GM10248 (cell line): ENCODE measurements at regions of chr2 and their contacts with region 1.

Region 1: DNA sequence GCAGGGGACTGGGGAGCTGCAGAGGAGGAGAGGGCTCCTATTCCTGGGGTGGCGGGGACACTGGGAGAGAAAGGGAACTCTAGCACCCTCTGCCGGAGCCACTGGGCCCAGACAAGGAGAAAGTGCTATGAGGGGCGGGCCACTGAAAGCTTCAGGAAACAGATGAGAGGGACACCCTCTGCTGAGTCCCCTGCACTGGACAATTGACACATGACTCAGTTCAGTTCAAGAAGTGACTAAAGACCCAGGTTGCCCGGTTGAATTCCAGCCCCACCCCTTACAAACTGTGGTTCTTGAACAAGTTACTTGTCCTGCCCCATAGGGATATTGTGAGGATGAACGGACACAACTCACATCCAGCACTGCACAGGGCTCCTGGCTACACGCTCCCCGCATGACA is 5.0 kb downstream of the RUFY4 start:
- DNase-seq: peak; percentile 62
- CTCF ChIP-seq: peak; percentile 67

Region 2: GRCh38 chr2:218060118-218060517 is 13.9 kb before region 1 on chr2:
- CTCF ChIA-PET with region 1: interaction called, 15 read pairs
- POLR2A ChIA-PET with region 1: no interaction called
- DNase-seq: no peak
- CTCF ChIP-seq: no peak

Region 3: DNA sequence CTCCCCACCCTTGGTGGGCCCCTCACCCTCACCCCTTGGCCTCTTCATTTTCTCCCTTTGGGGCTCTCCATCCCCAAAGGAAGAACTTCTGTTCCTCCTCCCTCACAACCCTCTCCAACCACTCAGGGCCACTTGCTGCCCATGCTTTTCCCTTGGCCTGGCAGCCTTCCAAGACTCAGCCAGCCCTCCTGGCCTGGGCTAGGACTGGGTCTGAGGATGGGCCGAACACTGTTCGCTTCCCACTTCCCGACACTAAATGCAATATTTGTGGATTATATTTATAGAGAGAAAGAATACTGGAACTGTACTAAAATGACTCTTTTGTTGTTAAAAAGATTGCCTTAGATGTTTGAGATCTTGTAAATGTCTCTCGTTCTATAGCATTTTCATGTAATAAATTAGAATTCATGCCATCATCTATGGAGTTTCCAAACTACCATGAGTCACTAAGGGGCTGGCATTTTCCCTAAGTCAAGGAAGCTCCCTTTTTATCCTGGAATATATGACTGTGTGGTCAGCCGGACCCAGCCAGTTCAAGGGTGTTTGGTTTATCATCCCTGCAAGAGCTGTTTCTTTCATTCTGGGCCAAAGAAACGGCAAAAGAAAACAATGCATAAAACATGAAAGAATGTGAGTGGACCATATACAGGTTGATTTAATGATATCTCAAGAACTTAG is 55.6 kb after region 1 on chr2:
- CTCF ChIA-PET with region 1: no interaction called
- POLR2A ChIA-PET with region 1: no interaction called
- DNase-seq: no peak
- CTCF ChIP-seq: no peak

Region 4: DNA sequence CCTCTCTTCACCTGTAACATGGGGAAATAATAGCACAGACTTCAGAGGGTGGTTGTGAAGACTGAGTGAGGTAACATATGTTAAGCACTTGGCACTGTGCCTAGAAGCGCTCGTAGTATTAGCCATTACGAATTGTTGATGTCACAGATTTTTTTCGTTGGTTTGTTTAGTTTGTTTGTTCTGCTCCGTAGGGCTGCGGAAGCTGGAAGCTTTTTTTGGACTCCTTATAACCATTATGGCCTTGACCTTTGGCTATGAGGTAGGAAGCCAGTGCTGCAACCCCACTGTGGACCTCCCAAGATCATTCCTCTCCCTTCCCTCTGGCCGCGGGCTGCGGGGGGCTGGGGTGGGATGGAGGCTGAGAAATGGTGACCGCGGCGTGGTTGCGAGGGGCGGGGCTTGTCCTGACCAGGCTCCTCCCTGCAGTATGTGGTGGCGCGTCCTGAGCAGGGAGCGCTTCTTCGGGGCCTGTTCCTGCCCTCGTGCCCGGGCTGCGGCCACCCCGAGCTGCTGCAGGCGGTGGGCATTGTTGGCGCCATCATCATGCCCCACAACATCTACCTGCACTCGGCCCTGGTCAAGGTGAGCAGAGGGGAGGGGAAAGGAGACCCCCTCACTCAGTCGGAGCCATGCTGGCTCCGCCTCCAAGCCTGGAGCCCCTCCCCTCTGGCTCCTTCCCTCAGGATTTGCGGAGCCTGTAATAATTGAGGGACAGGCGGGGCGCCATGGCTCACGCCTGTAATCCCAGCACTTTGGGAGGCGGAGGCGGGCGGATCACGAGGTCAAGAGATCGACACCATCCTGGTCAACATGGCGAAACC is 313.6 kb after region 1 on chr2:
- CTCF ChIA-PET with region 1: no interaction called
- POLR2A ChIA-PET with region 1: no interaction called
- DNase-seq: no peak
- CTCF ChIP-seq: no peak